ENCODE measurements at regions of chr4 and their contacts with region 1.

Region 1: GRCh38 chr4:36285784-36286480 is 4.5 kb downstream of the DTHD1 start:
- DNase-seq: peak; percentile 72
- H3K4me3 Mint-ChIP-seq: peak overlapping the region; percentile 45
- H3K27ac Mint-ChIP-seq: peak overlapping the region; percentile 91
- H3K4me1 Mint-ChIP-seq: peaks cover 64% of the 10 kb centered on the region
- H3K27me3 Mint-ChIP-seq: no peaks in the 10 kb centered on the region

Region 2: GRCh38 chr4:36081185-36081584 is 204.7 kb before region 1 on chr4:
- intact Hi-C with region 1: loop called (anchors 5 kb)
- DNase-seq: no peak
- H3K4me3 Mint-ChIP-seq: no peak overlapping the region
- H3K27ac Mint-ChIP-seq: no peak overlapping the region
- H3K4me1 Mint-ChIP-seq: peaks cover 12% of the 10 kb centered on the region
- H3K27me3 Mint-ChIP-seq: no peaks in the 10 kb centered on the region

Region 3: GRCh38 chr4:36208893-36209473 is 76.9 kb before region 1 on chr4:
- intact Hi-C with region 1: loop called (anchors 2 kb)
- DNase-seq: no peak
- H3K4me3 Mint-ChIP-seq: peak overlapping the region; percentile 13
- H3K27ac Mint-ChIP-seq: peak overlapping the region; percentile 74
- H3K4me1 Mint-ChIP-seq: peaks cover 46% of the 10 kb centered on the region
- H3K27me3 Mint-ChIP-seq: no peaks in the 10 kb centered on the region

Region 4: DNA sequence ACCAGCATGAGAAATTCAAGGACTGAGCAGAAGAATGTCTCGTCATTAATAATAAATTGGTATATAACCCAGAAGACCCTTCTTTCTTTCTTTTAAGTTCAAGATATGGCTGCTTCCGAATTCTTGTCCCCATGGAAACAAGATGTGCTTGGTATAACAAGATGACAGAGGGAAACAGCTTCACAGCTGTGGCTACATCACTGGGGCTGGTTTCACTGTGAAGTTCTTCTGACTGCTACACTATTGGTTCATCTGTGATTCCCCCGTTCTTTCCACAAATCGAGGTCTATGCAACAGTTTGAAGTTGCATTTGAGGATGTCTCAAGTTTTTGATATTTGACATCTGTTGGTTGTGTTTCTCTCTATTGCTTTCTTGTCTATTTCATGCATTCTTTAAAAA is 16.8 kb before region 1 on chr4:
- intact Hi-C with region 1: loop called (anchors 2 kb)
- DNase-seq: no peak
- H3K4me3 Mint-ChIP-seq: no peak overlapping the region
- H3K27ac Mint-ChIP-seq: peak overlapping the region; percentile 59
- H3K4me1 Mint-ChIP-seq: peaks cover 46% of the 10 kb centered on the region
- H3K27me3 Mint-ChIP-seq: no peaks in the 10 kb centered on the region

Region 5: DNA sequence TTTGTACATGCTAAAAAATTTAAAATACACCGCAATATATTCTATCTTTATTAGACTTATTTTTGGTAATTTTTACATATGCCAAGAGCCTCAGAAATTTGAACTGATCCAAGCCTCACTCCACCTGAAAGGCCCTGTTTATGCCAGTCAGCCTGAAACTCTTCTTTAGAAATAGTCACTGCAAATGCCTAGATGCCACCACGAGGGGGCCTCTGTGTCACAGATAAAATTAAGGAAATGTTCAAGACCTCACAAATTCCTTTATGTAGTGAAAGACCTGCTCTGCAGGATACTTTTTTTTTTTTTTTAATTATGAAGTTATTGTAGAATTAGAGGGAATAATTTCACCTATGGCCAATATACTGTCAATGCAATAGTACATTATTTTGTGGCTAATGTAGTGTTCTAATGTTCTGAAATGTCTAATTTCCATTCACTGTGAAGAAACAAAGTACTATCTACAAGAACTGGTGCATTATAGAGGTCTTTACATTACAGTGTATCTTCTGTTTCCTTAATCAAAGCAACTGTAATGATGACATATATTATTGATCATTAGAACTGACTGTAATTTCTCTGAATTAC is 65.2 kb after region 1 on chr4:
- intact Hi-C with region 1: loop called (anchors 1 kb)
- DNase-seq: peak; percentile 58
- H3K4me3 Mint-ChIP-seq: no peak overlapping the region
- H3K27ac Mint-ChIP-seq: no peak overlapping the region
- H3K4me1 Mint-ChIP-seq: peaks cover 32% of the 10 kb centered on the region
- H3K27me3 Mint-ChIP-seq: peaks cover 9% of the 10 kb centered on the region

Measured in activated T-helper 2 cell treated with anti-CD3 and anti-CD28 coated beads, Interferon-gamma antibody, Interleukin-2, Interleukin-4, amounts not matched to agents 10 μg/mL and 5 μg/mL and 100 μg/mL, durations not matched to agents 14 hours and 24 hours and 36 hours (primary cell).